RWPE1 (cell line): ENCODE measurements at regions of chr6 and their contacts with region 1.

Region 1: GRCh38 chr6:137799950-137800568 is 67.0 kb upstream of the TNFAIP3 start:
- DNase-seq: peak; percentile 44
- H3K27ac ChIP-seq: no peak overlapping the region
- CTCF ChIP-seq: peak; percentile 27; the same call in 1 of the 2 replicates

Region 2: DNA sequence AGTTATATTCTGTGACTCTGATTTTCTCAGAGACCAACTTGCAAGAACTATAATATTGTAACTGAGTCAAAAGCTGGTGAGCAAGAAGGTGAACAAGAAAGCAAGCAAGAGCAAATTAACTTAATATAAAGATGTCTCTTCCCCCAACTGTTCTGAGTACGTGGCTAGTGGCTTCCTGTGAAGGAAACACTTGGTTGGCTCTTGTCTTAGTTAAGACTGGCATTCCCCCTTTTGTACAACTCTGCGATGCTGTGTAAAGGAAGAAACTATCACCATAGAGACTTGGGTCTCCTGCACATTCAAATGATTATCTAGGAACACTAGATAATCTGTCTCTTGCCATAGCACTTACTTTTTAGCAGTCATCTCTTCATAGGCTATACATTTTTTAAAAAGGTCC is 19.7 kb after region 1 on chr6:
- CTCF ChIA-PET with region 1: no interaction called
- POLR2A ChIA-PET with region 1: no interaction called
- DNase-seq: no peak
- H3K27ac ChIP-seq: no peak overlapping the region
- CTCF ChIP-seq: no peak

Region 3: GRCh38 chr6:137846772-137847313 is 46.8 kb after region 1 on chr6:
- CTCF ChIA-PET with region 1: no interaction called
- POLR2A ChIA-PET with region 1: no interaction called
- DNase-seq: no peak
- H3K27ac ChIP-seq: no peak overlapping the region
- CTCF ChIP-seq: no peak

Region 4: DNA sequence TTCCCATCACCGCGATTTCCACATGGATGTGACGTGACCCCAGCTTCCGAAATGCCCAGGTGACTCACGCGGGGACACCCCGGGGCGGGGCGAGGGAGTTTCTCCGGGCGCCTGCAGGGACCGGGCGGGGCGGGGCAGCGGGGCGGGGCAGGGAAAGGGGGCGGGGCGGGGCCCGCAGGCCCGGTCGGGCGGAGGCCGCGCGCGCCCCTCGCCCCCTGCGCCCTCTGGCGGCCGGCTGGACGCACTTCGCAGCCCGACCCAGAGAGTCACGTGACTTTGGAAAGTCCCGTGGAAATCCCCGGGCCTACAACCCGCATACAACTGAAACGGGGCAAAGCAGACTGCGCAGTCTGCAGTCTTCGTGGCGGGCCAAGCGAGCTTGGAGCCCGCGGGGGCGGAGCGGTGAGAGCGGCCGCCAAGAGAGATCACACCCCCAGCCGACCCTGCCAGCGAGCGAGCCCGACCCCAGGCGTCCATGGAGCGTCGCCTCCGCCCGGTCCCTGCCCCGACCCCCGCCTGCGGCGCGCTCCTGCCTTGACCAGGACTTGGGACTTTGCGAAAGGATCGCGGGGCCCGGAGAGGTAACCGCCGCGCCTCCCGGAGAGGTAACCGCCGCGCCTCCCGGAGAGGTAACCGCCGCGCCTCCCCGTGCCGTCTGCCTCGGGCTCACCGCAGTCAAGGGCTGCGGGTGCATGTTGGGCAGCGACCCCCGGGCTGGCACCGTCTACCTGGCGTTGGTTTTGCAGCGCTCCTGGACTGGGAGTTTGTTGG is 67.0 kb after region 1 on chr6 and contains the start of gene TNFAIP3:
- CTCF ChIA-PET with region 1: interaction called, 12 read pairs
- POLR2A ChIA-PET with region 1: no interaction called
- DNase-seq: peak; percentile 96
- H3K27ac ChIP-seq: peak within 1 kb of the TSS; percentile 80
- CTCF ChIP-seq: peak; percentile 92